ENCODE measurements at regions of chr10 and their contacts with region 1.

Region 1: GRCh38 chr10:92742331-92743228 is 52.8 kb downstream of the HHEX start:
- DNase-seq: peak; percentile 89
- ATAC-seq: peak; percentile 93
- H3K4me3 ChIP-seq: peak overlapping the region in 3 of 5 experiments; percentile 25 to 37 (median 30)
- H3K4me3 Mint-ChIP-seq: peak overlapping the region; percentile 68
- H3K27ac ChIP-seq: peak overlapping the region; percentile 87 to 91
- H3K27ac Mint-ChIP-seq: peak overlapping the region; percentile 91
- H3K4me1 ChIP-seq: peaks cover 60 to 66% of the 10 kb centered on the region in 2 donors
- H3K4me1 Mint-ChIP-seq: peaks cover 70% of the 10 kb centered on the region
- H3K27me3 ChIP-seq: no peaks in the 10 kb centered on the region
- H3K27me3 Mint-ChIP-seq: no peaks in the 10 kb centered on the region
- CTCF ChIP-seq: no peak

Region 2: DNA sequence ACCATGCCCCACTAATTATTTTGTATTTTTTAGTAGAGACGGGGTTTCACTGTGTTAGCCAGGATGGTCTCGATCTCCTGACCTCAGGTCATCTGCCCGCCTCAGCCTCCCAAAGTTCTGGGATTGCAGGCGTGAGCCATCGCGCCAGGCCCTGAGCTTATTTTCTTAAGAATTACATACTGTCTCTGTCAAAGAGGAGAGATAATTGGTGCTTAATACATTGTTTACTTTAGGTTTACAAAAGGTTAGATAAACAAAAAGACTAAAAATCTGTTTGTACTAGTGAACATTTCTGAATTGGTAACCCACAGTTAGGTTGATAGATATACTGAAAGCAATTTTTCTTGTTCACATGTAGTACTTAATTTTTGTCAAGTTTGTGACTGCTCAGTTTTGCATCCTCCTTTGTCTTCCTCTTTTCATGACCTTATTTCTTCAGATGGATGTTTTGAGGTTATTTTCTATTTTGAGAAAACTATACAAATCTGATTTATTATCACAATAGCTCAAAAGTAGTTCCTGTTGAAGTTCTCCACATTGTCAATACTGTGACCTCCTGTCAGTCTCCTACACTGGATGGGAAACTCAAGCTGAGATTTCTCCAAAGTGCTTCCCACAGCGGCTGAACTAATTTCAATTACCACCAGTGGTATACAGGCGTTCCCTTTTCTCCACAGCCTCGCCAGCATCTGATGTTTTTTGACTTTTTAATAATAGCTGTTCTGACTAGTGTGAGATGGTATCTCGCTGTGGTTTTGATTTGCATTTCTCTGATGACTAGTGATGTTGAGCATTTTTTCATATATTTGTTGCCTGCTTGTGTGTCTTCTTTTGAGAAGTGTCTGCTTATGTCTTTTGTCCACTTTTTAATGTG is 30.3 kb before region 1 on chr10:
- CTCF ChIA-PET with region 1: interaction called, 16 read pairs
- POLR2A ChIA-PET with region 1: interaction called, 6 read pairs
- intact Hi-C with region 1: loop called (anchors 1 kb)
- DNase-seq: peak; percentile 79
- ATAC-seq: peak; percentile 73
- H3K4me3 ChIP-seq: peak overlapping the region in 3 of 5 experiments; percentile 12 to 37 (median 27)
- H3K4me3 Mint-ChIP-seq: peak overlapping the region; percentile 76
- H3K27ac ChIP-seq: peak overlapping the region; percentile 73 to 74
- H3K27ac Mint-ChIP-seq: peak overlapping the region; percentile 95
- H3K4me1 ChIP-seq: peaks cover 54 to 61% of the 10 kb centered on the region in 2 donors
- H3K4me1 Mint-ChIP-seq: peaks cover 60% of the 10 kb centered on the region
- H3K27me3 ChIP-seq: no peaks in the 10 kb centered on the region
- H3K27me3 Mint-ChIP-seq: no peaks in the 10 kb centered on the region
- CTCF ChIP-seq: no peak

Region 3: GRCh38 chr10:92719991-92720830 is 22.4 kb before region 1 on chr10:
- CTCF ChIA-PET with region 1: interaction called, 4 read pairs
- POLR2A ChIA-PET with region 1: interaction called, 11 read pairs
- intact Hi-C with region 1: loop called (anchors 1 kb)
- DNase-seq: no peak
- ATAC-seq: peak; percentile 39
- H3K4me3 ChIP-seq: no peak overlapping the region
- H3K4me3 Mint-ChIP-seq: peak overlapping the region; percentile 5
- H3K27ac ChIP-seq: peak overlapping the region in 1 of 2 donors; percentile 21
- H3K27ac Mint-ChIP-seq: no peak overlapping the region
- H3K4me1 ChIP-seq: peaks cover 48 to 50% of the 10 kb centered on the region in 2 donors
- H3K4me1 Mint-ChIP-seq: peaks cover 50% of the 10 kb centered on the region
- H3K27me3 ChIP-seq: no peaks in the 10 kb centered on the region
- H3K27me3 Mint-ChIP-seq: no peaks in the 10 kb centered on the region
- CTCF ChIP-seq: no peak

Region 4: GRCh38 chr10:92757066-92757710 is 14.6 kb after region 1 on chr10:
- CTCF ChIA-PET with region 1: interaction called, 31 read pairs
- POLR2A ChIA-PET with region 1: interaction called, 28 read pairs
- intact Hi-C with region 1: loop called (anchors 1 kb)
- DNase-seq: peak; percentile 86
- ATAC-seq: peak; percentile 66
- H3K4me3 ChIP-seq: peak overlapping the region; percentile 16 to 36 (median 29)
- H3K4me3 Mint-ChIP-seq: peak overlapping the region; percentile 75
- H3K27ac ChIP-seq: peak overlapping the region; percentile 84 to 87
- H3K27ac Mint-ChIP-seq: peak overlapping the region; percentile 97
- H3K4me1 ChIP-seq: peaks cover 65 to 73% of the 10 kb centered on the region in 2 donors
- H3K4me1 Mint-ChIP-seq: peaks cover 75% of the 10 kb centered on the region
- H3K27me3 ChIP-seq: no peaks in the 10 kb centered on the region
- H3K27me3 Mint-ChIP-seq: no peaks in the 10 kb centered on the region
- CTCF ChIP-seq: peak; percentile 42

Region 5: DNA sequence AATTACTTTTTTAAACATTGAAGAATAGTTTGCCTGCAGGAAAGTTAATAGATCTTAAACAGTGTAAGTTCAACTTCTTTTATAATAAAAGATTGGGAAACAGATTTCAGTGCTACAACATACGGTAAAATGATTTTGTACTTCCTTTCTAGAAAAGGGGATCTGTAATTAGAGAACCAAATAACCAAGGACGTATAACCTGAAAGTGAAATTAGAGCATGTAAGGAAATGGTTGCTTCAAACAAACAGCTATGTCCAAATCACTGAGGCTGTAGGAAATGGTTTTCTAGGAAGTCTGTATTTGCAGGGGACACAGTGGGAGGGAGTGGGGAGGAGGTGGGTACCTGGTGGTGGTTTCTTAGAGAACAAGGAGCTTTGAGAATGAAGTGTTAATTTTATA is 47.9 kb after region 1 on chr10:
- CTCF ChIA-PET with region 1: no interaction called
- POLR2A ChIA-PET with region 1: no interaction called
- intact Hi-C with region 1: loop called (anchors 1 kb)
- DNase-seq: peak; percentile 69
- ATAC-seq: peak; percentile 63
- H3K4me3 ChIP-seq: peak overlapping the region in 1 of 5 experiments; percentile 23
- H3K4me3 Mint-ChIP-seq: peak overlapping the region; percentile 57
- H3K27ac ChIP-seq: peak overlapping the region; percentile 70 to 82
- H3K27ac Mint-ChIP-seq: peak overlapping the region; percentile 92
- H3K4me1 ChIP-seq: peaks cover 44 to 47% of the 10 kb centered on the region in 2 donors
- H3K4me1 Mint-ChIP-seq: peaks cover 40% of the 10 kb centered on the region
- H3K27me3 ChIP-seq: no peaks in the 10 kb centered on the region
- H3K27me3 Mint-ChIP-seq: no peaks in the 10 kb centered on the region
- CTCF ChIP-seq: no peak